ENCODE measurements at regions of chr5 and their contacts with region 1.

Region 1: GRCh38 chr5:59810041-59810440 is 83.5 kb downstream of the PDE4D start:
- DNase-seq: peak; percentile 72
- H3K4me3 Mint-ChIP-seq: no peak overlapping the region
- H3K27ac Mint-ChIP-seq: no peak overlapping the region
- H3K4me1 Mint-ChIP-seq: no peaks in the 10 kb centered on the region
- H3K27me3 Mint-ChIP-seq: peaks cover 11% of the 10 kb centered on the region

Region 2: GRCh38 chr5:60161340-60161934 is 351.4 kb after region 1 on chr5:
- CTCF ChIA-PET with region 1: no interaction called
- POLR2A ChIA-PET with region 1: no interaction called
- intact Hi-C with region 1: loop called (anchors 5 kb)
- DNase-seq: no peak
- H3K4me3 Mint-ChIP-seq: no peak overlapping the region
- H3K27ac Mint-ChIP-seq: no peak overlapping the region
- H3K4me1 Mint-ChIP-seq: no peaks in the 10 kb centered on the region
- H3K27me3 Mint-ChIP-seq: no peaks in the 10 kb centered on the region

Region 3: GRCh38 chr5:60287174-60287771 is 477.2 kb after region 1 on chr5:
- CTCF ChIA-PET with region 1: no interaction called
- POLR2A ChIA-PET with region 1: no interaction called
- intact Hi-C with region 1: loop called (anchors 5 kb)
- DNase-seq: peak; percentile 12
- H3K4me3 Mint-ChIP-seq: no peak overlapping the region
- H3K27ac Mint-ChIP-seq: no peak overlapping the region
- H3K4me1 Mint-ChIP-seq: no peaks in the 10 kb centered on the region
- H3K27me3 Mint-ChIP-seq: no peaks in the 10 kb centered on the region

Region 4: GRCh38 chr5:60382716-60383115 is 572.7 kb after region 1 on chr5:
- CTCF ChIA-PET with region 1: interaction called, 3 read pairs
- POLR2A ChIA-PET with region 1: no interaction called
- intact Hi-C with region 1: loop called (anchors 5 kb)
- DNase-seq: no peak
- H3K4me3 Mint-ChIP-seq: no peak overlapping the region
- H3K27ac Mint-ChIP-seq: no peak overlapping the region
- H3K4me1 Mint-ChIP-seq: no peaks in the 10 kb centered on the region
- H3K27me3 Mint-ChIP-seq: no peaks in the 10 kb centered on the region

Region 5: DNA sequence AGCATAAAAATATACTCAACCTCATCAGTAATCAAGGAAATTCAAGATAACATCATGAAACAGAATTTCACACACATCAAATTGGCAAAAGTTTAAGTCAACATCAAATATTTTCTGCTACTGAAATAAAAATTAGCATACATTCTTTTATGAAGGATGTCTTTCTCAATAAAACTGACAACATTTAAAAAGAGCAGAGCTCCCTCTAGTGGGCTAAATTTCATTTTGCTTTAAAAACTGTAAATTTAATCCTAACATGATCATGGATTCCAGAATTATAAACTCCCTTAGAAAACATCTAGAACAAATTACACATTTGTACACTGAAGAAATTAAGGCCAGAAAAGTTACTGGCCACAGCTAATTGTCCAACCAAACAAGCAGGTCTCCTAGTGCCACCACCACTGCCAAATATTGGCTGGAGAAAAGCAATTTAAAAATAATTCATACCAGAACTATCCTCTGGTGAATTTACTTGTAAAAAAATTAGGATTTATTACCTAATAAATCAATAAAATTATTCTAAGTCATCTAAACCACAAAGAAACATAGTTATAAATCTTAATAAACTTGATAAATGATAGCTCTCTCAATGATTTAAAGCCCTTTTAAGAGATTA is 858.8 kb after region 1 on chr5:
- CTCF ChIA-PET with region 1: interaction called, 31 read pairs
- POLR2A ChIA-PET with region 1: no interaction called
- intact Hi-C with region 1: loop called (anchors 1 kb)
- DNase-seq: no peak
- H3K4me3 Mint-ChIP-seq: no peak overlapping the region
- H3K27ac Mint-ChIP-seq: no peak overlapping the region
- H3K4me1 Mint-ChIP-seq: no peaks in the 10 kb centered on the region
- H3K27me3 Mint-ChIP-seq: no peaks in the 10 kb centered on the region

Measured in activated CD4-positive, alpha-beta memory T cell treated with anti-CD3 and anti-CD28 coated beads for 36 hours (primary cell).